Heart right ventricle (tissue), 16 donors: ENCODE measurements at regions of chr6 and their contacts with region 1.

Region 1: DNA sequence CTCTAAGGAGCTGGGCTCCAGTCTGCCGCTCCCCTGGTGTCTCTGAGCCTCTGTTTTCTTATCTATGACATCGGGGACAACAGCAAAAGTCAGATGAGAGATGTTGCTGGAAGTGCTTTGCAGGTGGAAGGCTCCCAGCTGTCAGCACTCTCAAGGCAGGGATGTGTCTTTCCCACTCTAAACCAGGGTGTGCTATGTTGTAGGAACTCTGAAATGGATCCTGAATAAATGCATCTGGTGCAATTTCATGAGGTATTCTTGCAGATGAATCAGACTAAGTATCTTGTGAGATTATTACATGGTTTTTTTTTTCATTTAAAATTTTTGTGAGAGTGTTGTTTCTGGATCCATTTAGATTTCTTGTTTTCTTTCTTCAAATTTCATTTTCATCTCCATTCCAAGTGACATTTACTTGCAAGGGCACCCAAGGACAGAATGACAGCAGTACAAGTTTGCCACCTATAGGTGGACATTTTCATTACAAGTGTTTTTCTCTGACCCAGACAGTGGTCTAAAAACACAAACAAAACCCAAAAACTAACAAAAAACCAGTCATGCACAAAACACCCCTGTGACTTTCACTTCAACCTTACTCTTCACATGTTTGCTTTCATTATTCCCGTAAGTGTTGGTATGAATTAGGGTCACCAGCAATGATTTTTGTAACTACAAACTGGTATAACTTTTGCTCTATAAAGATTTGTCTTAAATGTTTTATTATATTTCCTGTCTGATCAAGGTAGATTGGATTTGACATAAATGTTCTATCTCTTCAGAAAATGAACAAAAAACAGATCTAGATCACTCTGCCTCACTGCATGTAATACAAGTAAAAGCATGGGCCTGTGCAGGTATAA is 14.7 kb upstream of the SIM1 start:
- DNase-seq: no peak
- ATAC-seq: peak in 2 of 8 donors; percentile 44 to 49
- H3K4me3 ChIP-seq: no peak overlapping the region
- H3K27ac ChIP-seq: no peak overlapping the region
- H3K4me1 ChIP-seq: no peaks in the 10 kb centered on the region
- H3K27me3 ChIP-seq: peaks cover 0 to 55% (median 23%) of the 10 kb centered on the region in 7 donors
- CTCF ChIP-seq: peak; percentile 30 to 78 (median 68)

Region 2: GRCh38 chr6:100001915-100002388 is 477.5 kb before region 1 on chr6:
- intact Hi-C with region 1: loop called in 2 of 10 experiments (anchors 2 to 10 kb)
- DNase-seq: peak; percentile 12 to 16
- ATAC-seq: peak in 2 of 8 donors; percentile 61 to 69
- H3K4me3 ChIP-seq: no peak overlapping the region
- H3K27ac ChIP-seq: no peak overlapping the region
- H3K4me1 ChIP-seq: no peaks in the 10 kb centered on the region
- H3K27me3 ChIP-seq: peaks cover 0 to 54% (median 27%) of the 10 kb centered on the region in 7 donors
- CTCF ChIP-seq: peak; percentile 59 to 94 (median 82)

Region 3: DNA sequence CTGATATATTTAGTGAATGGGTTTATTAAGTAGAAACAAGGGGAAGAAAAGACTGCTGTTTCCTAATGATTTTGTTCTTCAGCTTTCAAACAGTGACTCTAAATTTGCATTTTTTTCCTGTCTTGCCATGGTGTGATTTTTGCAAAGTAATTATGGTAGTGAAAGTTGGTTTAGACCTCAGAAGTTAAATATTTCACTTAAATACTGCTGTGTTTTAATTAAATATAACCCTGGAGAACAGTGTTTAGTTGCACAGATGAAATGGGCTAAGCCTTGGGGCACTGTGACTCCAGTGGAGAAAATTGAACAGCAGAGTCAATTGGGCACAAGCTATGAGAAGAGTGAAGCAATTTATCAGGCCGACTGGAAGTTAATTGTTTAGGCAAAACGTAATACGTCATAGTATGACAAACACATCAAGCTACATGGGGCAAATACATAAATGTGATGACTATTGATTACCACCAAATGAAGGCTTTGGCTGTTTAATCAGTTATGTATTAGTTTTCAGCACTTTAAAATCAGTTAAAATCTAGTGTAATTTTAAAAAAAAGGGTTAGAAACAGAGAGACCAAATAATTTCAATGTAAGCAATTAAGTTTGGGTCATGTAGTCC is 374.2 kb before region 1 on chr6:
- intact Hi-C with region 1: loop called in 3 of 10 experiments (anchors 2 to 10 kb)
- DNase-seq: no peak
- ATAC-seq: no peak
- H3K4me3 ChIP-seq: no peak overlapping the region
- H3K27ac ChIP-seq: no peak overlapping the region
- H3K4me1 ChIP-seq: no peaks in the 10 kb centered on the region
- H3K27me3 ChIP-seq: peaks cover 0 to 32% (median 22%) of the 10 kb centered on the region in 7 donors
- CTCF ChIP-seq: no peak

Region 4: DNA sequence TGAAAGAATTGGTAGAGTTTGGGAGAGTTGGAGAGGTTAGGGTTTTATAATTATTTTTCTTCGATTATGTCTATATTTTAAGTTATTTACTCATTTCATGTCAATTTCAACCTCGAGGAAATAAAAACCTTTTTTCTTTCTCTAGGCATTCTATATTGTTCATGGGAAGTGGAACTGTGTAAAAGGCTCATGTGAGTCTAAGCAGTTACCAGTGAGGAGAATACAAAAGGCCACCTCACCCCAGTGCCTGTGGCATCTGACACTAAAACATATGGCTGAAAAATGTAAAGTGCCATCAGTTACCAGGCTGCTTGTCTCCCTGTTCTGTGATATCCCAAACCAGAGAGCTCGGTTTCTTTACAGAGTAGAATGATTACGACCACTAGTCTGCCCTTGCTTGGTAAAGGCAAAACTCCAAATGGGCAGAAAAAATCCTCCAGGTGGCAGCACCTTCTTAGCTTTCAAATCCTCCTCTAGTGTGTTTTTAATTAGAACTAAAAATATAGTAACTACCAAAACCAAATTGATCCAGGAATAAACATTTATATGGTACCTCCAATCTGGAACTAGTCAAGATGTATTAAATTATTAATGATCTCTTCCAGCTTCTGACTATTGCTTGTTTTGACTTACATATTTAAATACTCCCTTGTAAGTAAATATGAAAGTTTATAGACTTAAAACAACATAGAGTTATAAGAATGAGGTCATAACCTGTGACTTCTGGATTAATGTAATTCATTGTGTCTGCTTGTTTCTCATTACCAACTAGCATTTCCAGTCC is 362.8 kb before region 1 on chr6:
- intact Hi-C with region 1: loop called (anchors 1 to 10 kb)
- DNase-seq: peak in 1 of 2 donors; percentile 29
- ATAC-seq: no peak
- H3K4me3 ChIP-seq: no peak overlapping the region
- H3K27ac ChIP-seq: no peak overlapping the region
- H3K4me1 ChIP-seq: no peaks in the 10 kb centered on the region
- H3K27me3 ChIP-seq: peaks cover 0 to 10% (median 0%) of the 10 kb centered on the region in 7 donors
- CTCF ChIP-seq: peak; percentile 34 to 72 (median 64)